Endothelial cell of umbilical vein (primary cell): ENCODE measurements at regions of chr6 and their contacts with region 1.

Region 1: GRCh38 chr6:71383901-71384489 is 95.4 kb downstream of the OGFRL1 start:
- DNase-seq: peak; percentile 84
- H3K4me3 ChIP-seq: no peak overlapping the region
- H3K27ac ChIP-seq: no peak overlapping the region
- H3K4me1 ChIP-seq: peaks cover 43% of the 10 kb centered on the region
- H3K27me3 ChIP-seq: no peaks in the 10 kb centered on the region
- CTCF ChIP-seq: peak; percentile 30 to 34
- POLR2A ChIP-seq: no peak

Region 2: DNA sequence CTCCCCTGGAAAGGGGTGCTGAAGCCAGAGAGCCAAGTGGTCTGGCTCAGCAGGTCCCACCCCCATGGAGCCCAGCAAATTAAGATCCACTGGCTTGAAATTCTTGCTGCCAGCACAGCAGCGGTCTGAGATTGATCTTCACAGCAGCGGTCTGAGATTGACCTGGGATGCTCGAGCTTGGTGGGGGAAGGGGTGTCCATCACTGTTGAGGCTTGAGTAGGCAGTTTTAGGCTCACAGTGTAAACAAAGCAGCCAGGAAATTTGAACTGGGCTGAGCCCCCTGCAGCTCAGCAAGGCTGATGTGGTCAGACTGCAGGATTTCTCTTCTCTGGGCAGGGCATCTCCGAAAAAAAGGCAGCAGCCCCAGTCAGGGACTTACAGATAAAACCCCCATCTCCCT is 385.8 kb before region 1 on chr6:
- CTCF ChIA-PET with region 1: no interaction called
- POLR2A ChIA-PET with region 1: no interaction called
- dilution Hi-C with region 1: no loop called
- intact Hi-C with region 1: no loop called
- DNase-seq: no peak
- H3K4me3 ChIP-seq: no peak overlapping the region
- H3K27ac ChIP-seq: no peak overlapping the region
- H3K4me1 ChIP-seq: no peaks in the 10 kb centered on the region
- H3K27me3 ChIP-seq: no peaks in the 10 kb centered on the region
- CTCF ChIP-seq: no peak
- POLR2A ChIP-seq: no peak

Region 3: DNA sequence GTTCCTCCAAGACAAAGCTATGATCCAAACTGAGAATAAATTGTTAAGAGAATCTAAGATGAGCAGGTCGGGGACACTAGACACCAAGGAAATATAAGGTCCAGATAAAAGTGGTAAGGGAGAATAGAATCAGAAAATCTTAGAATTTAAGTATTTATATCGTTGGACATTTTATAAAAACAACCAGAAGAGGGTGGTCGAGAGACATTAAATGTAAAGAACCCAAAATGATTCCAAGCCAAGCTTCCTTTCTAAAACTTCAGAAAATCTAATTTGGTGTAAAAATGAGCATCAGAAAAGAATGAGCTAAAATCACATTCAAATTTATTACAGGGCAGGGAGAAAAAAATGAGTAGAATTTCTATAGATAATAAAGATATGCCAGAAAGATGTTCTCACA is 193.2 kb before region 1 on chr6:
- CTCF ChIA-PET with region 1: interaction called, 14 read pairs
- POLR2A ChIA-PET with region 1: no interaction called
- dilution Hi-C with region 1: no loop called
- intact Hi-C with region 1: no loop called
- DNase-seq: peak; percentile 41
- H3K4me3 ChIP-seq: no peak overlapping the region
- H3K27ac ChIP-seq: no peak overlapping the region
- H3K4me1 ChIP-seq: no peaks in the 10 kb centered on the region
- H3K27me3 ChIP-seq: no peaks in the 10 kb centered on the region
- CTCF ChIP-seq: peak; percentile 10 to 14
- POLR2A ChIP-seq: no peak

Region 4: DNA sequence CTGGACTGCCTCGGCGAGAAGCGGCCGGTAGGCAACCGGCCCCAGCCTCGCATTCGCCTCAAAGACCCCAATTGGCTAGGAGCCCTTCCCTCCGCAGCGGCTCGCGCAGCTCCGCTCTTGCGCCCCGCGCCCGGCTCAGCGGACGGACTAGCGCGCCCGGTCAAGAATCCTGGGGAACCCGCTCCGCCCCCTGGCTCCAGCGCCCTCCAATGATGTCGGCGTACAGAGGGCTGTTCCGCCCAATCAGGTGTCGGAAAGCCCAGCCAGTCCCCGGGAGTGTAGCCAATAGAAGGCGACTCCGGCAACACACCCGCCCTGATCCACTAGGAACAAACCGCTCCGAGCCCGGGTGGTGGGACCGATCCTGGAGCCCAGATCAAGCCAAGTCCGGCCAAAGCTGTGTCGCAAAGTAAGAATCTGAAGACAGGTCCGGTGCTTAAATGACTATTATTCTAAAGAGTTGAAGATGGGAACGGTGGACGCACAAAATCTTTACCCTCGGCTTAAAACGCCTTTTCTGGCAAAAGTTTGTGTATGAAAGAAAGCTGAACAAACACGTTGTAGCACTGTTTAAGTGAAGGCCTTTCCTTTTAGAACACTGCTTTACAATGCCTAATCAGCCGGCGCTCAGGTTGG is 36.8 kb after region 1 on chr6:
- CTCF ChIA-PET with region 1: interaction called, 9 read pairs
- POLR2A ChIA-PET with region 1: no interaction called
- dilution Hi-C with region 1: no loop called
- intact Hi-C with region 1: loop called (anchors 1 kb)
- DNase-seq: peak; percentile 97
- H3K4me3 ChIP-seq: peak overlapping the region; percentile 65 to 97 (median 93)
- H3K27ac ChIP-seq: peak overlapping the region; percentile 71
- H3K4me1 ChIP-seq: peaks cover 18% of the 10 kb centered on the region
- H3K27me3 ChIP-seq: no peaks in the 10 kb centered on the region
- CTCF ChIP-seq: no peak
- POLR2A ChIP-seq: peak; percentile 89

Region 5: GRCh38 chr6:71510057-71510713 is 126.2 kb after region 1 on chr6:
- CTCF ChIA-PET with region 1: interaction called, 130 read pairs
- POLR2A ChIA-PET with region 1: no interaction called
- dilution Hi-C with region 1: loop called (anchors 25 kb)
- intact Hi-C with region 1: loop called (anchors 1 kb)
- DNase-seq: peak; percentile 79
- H3K4me3 ChIP-seq: no peak overlapping the region
- H3K27ac ChIP-seq: no peak overlapping the region
- H3K4me1 ChIP-seq: peaks cover 7% of the 10 kb centered on the region
- H3K27me3 ChIP-seq: no peaks in the 10 kb centered on the region
- CTCF ChIP-seq: peak; percentile 57 to 59
- POLR2A ChIP-seq: no peak

Region 6: DNA sequence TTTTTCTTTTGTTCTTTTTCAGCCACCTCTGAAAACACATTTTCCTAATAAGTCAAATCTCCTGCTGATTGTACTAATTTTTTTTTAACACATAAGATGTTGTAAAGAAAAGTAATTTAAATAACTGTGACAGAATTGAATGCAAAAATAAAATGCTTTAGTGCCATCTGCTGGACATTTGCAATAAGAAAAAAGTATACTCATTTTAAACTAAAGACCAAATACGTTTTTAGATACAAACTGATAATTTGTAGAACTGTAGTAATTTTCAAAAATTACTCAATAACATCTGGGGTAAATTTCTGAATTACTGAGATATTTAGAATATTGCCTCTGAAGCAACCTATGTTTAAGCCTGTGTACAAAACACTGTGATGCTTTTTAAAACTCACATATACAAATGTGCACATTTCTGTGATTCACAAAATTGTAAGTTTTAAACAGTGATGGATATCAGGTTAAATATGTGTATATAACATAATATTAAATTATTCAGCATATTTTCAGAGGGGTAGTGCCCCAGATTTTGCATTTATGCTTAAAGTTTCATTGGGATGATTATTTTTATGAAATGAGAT is 701.1 kb after region 1 on chr6:
- CTCF ChIA-PET with region 1: no interaction called
- POLR2A ChIA-PET with region 1: no interaction called
- dilution Hi-C with region 1: no loop called
- intact Hi-C with region 1: loop called (anchors 5 kb)
- DNase-seq: peak; percentile 24
- H3K4me3 ChIP-seq: no peak overlapping the region
- H3K27ac ChIP-seq: no peak overlapping the region
- H3K4me1 ChIP-seq: no peaks in the 10 kb centered on the region
- H3K27me3 ChIP-seq: peaks cover 0 to 4% of the 10 kb centered on the region in 2 experiments
- CTCF ChIP-seq: peak; percentile 8 to 18
- POLR2A ChIP-seq: no peak

Region 7: DNA sequence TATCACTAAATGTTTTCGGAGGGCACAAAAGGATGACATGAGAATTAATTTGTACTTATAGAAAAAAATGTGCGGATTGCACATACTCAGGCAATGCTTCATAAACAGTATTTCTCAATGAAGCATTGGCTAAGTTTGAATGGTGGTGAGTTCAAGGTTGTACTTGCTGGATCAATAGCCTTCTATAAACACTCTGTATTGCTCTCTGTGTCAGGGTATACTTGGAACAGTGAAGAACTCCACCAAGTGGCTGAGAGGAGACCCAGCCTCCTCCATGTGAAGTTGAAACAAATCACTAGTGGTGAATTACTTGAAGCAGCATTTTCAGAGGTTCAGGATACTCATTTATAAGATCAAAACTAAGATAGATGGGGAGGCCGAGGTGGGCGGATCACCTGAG is 862.9 kb after region 1 on chr6:
- CTCF ChIA-PET with region 1: no interaction called
- POLR2A ChIA-PET with region 1: no interaction called
- dilution Hi-C with region 1: no loop called
- intact Hi-C with region 1: no loop called
- DNase-seq: no peak
- H3K4me3 ChIP-seq: no peak overlapping the region
- H3K27ac ChIP-seq: no peak overlapping the region
- H3K4me1 ChIP-seq: no peaks in the 10 kb centered on the region
- H3K27me3 ChIP-seq: no peaks in the 10 kb centered on the region
- CTCF ChIP-seq: no peak
- POLR2A ChIP-seq: no peak